ENCODE measurements at regions of chr13 and their contacts with region 1.

Region 1: GRCh38 chr13:78649997-78650716 is 8.8 kb downstream of the OBI1 start:
- DNase-seq: no peak
- ATAC-seq: no peak
- H3K4me3 ChIP-seq: no peak overlapping the region
- H3K27ac ChIP-seq: no peak overlapping the region
- H3K4me1 ChIP-seq: peaks cover 18 to 21% of the 10 kb centered on the region in 2 donors
- H3K27me3 ChIP-seq: no peaks in the 10 kb centered on the region
- CTCF ChIP-seq: no peak
- POLR2A ChIP-seq: no peak

Region 2: DNA sequence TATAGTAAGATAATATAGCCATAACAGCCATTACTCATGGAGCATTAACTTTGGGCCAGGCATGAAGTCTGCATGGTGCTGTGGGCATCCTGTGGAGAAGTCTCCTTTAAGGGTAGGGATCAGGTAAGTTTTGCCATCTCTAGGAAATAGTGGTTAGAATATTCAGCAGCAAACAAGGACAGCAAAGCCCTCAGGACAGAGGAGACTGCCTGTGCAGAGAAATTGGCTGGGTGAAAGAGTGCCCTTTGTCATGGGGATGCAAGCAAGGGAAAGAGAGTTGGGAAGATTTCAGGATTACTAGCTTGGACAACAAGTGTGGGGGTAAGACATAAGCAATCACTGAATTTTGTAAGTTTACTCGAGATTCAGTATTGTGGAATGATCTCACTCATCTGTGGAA is 24.5 kb after region 1 on chr13:
- in situ Hi-C with region 1: no loop called
- intact Hi-C with region 1: loop called (anchors 1 kb)
- DNase-seq: no peak
- ATAC-seq: no peak
- H3K4me3 ChIP-seq: no peak overlapping the region
- H3K27ac ChIP-seq: no peak overlapping the region
- H3K4me1 ChIP-seq: no peaks in the 10 kb centered on the region
- H3K27me3 ChIP-seq: no peaks in the 10 kb centered on the region
- CTCF ChIP-seq: no peak
- POLR2A ChIP-seq: no peak

Region 3: GRCh38 chr13:78689011-78689410 is 38.9 kb after region 1 on chr13:
- in situ Hi-C with region 1: no loop called
- intact Hi-C with region 1: no loop called
- DNase-seq: no peak
- ATAC-seq: no peak
- H3K4me3 ChIP-seq: no peak overlapping the region
- H3K27ac ChIP-seq: no peak overlapping the region
- H3K4me1 ChIP-seq: no peaks in the 10 kb centered on the region
- H3K27me3 ChIP-seq: no peaks in the 10 kb centered on the region
- CTCF ChIP-seq: no peak
- POLR2A ChIP-seq: no peak